ENCODE measurements at regions of chr11 and their contacts with region 1.

Region 1: GRCh38 chr11:33700425-33701271 is at the start of gene C11orf91:
- DNase-seq: peak; percentile 88 to 98 (median 95)
- ATAC-seq: peak; percentile 99
- H3K4me3 ChIP-seq: peak within 1 kb of the TSS; percentile 54
- H3K4me3 Mint-ChIP-seq: peak within 1 kb of the TSS; percentile 84 to 96 (median 92)
- H3K27ac ChIP-seq: no peak within 1 kb of the TSS
- H3K27ac Mint-ChIP-seq: peak within 1 kb of the TSS; percentile 61 to 84 (median 76)
- H3K4me1 ChIP-seq: peaks cover 9 to 13% of the 10 kb centered on the region in 2 donors
- H3K4me1 Mint-ChIP-seq: peaks cover 14 to 27% (median 23%) of the 10 kb centered on the region in 7 donors
- H3K27me3 ChIP-seq: no peaks in the 10 kb centered on the region
- H3K27me3 Mint-ChIP-seq: peaks cover 0 to 31% (median 5%) of the 10 kb centered on the region in 5 donors
- total RNA-seq, gene C11orf91: not detected

Region 2: DNA sequence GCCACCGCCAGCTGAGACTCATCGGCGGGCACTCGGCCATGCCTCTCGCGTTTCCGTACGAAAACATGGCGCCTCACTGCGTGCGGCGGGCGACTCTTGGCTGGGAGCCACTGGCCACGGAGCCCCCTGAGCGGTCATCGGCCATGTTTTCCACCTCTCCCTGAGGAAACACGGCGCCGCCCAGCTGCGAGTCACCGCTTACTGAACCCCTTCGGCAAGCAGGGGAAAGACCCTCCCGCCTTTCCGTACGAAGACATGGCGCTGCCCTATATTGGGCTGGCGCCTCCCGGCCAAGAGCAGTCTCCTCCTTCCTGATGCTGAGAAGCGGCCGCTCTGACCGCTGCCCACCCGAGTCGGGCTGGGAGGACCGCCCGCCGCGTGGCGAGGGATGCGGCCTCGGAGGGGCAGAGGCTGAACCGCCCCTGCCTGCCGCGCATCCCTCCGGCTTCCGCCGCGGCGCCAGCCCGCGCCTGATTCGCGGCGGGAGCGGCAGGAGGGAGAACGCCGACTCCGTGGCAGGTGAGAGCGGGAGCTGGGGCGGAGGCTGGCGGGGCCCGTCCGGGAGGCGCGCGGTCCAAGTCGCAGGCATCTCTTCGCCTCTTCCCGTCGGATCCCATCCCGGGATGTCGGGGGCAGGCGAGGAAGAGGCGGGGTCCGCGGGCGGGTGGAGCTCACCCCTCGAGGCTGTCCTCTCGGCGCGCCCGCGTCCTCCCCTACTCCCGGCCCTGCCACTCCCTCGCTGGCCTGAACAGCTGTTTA is 661.2 kb before region 1 on chr11 and contains the start of gene TCP11L1:
- CTCF ChIA-PET with region 1: no interaction called
- POLR2A ChIA-PET with region 1: no interaction called
- intact Hi-C with region 1: loop called in 1 of 2 experiments (anchors 10 kb)
- DNase-seq: peak; percentile 57 to 88 (median 76)
- ATAC-seq: peak; percentile 93
- H3K4me3 ChIP-seq: peak within 1 kb of the TSS; percentile 100
- H3K4me3 Mint-ChIP-seq: peak within 1 kb of the TSS; percentile 91 to 97 (median 94)
- H3K27ac ChIP-seq: peak within 1 kb of the TSS; percentile 82
- H3K27ac Mint-ChIP-seq: peak within 1 kb of the TSS; percentile 77 to 95 (median 92)
- H3K4me1 ChIP-seq: peaks cover 3 to 9% of the 10 kb centered on the region in 2 donors
- H3K4me1 Mint-ChIP-seq: peaks cover 0 to 17% (median 14%) of the 10 kb centered on the region in 7 donors
- H3K27me3 ChIP-seq: no peaks in the 10 kb centered on the region
- H3K27me3 Mint-ChIP-seq: peaks cover 0 to 17% (median 0%) of the 10 kb centered on the region in 5 donors
- total RNA-seq, gene TCP11L1: 9.1 to 17.1 (median 13.3) TPM

Region 3: DNA sequence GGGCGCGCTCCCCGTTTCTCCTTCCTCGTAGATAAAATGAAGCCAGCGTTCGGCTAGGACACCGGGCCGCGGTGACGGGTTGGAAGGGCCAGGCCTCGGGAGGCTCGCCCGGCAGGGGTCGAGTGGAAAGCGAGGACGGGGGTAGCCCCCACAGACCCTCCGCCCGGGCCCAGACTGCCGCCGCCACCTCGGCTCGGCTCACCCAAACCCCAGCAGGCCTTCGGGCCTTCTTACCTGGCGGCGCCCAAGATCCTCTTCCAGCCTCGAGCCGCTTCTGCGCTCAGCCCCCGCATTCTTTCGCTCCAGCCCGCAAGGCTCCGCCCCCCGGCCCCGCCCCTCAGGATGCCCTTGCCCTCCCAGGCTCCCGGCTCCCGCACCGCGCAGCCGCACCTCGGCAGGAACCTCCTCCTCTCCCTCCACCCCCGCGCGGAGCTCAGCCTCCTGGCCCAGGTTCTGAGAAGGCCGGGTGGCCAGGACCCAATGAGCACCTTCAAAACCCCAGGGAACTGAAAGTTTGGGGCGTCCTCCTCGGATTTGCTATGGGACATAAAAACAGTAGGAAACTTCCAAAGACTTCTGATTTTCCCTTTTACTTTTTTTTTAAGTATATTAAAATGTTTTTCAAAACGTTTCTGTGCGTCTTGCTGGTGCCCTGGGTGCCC is 35.6 kb after region 1 on chr11 and contains the start of gene CD59:
- CTCF ChIA-PET with region 1: no interaction called
- POLR2A ChIA-PET with region 1: interaction called, 9 read pairs
- intact Hi-C with region 1: loop called (anchors 1 kb)
- DNase-seq: peak; percentile 75 to 94 (median 85)
- ATAC-seq: peak; percentile 92
- H3K4me3 ChIP-seq: peak within 1 kb of the TSS; percentile 76
- H3K4me3 Mint-ChIP-seq: peak within 1 kb of the TSS; percentile 87 to 97 (median 92)
- H3K27ac ChIP-seq: peak within 1 kb of the TSS; percentile 72
- H3K27ac Mint-ChIP-seq: peak within 1 kb of the TSS; percentile 79 to 94 (median 86)
- H3K4me1 ChIP-seq: peaks cover 9 to 17% of the 10 kb centered on the region in 2 donors
- H3K4me1 Mint-ChIP-seq: peaks cover 21 to 41% (median 36%) of the 10 kb centered on the region in 7 donors
- H3K27me3 ChIP-seq: no peaks in the 10 kb centered on the region
- H3K27me3 Mint-ChIP-seq: peaks cover 0 to 11% (median 0%) of the 10 kb centered on the region in 5 donors
- total RNA-seq, gene CD59: 23.3 to 152 (median 62.7) TPM

Region 4: DNA sequence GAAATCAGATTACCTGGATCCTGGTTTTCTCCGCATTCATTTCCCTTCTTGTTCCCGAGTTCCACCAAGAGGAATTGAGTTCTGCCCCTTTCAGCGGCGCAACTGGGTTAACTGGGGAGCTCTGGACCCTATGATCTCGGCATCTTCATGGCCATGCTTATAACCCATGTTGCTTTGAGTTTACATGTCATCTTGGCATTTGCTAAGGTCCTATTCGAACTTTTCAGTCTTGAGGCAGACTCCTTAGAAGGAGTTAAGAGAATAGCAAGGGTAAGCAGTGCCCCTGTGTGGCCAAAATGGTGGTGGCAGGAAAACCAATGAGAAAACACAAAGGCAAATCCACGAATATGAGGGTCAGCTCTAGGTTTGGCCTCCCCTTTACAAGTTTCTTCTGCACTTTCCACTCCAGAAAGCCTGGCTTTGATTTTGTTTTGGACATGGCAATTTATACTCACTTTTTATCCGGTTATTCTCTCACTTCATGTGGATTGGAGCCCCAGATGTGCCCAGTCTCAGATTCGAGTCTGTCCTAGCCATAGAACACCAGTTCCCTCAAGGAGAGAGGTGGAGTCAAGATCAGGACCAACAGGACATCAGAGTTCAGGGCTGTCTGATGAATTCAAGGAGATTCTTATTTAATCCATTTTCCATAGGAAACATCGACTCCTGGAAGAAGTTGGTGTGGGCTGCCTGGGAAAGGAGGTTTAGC is 128.9 kb after region 1 on chr11:
- CTCF ChIA-PET with region 1: no interaction called
- POLR2A ChIA-PET with region 1: no interaction called
- intact Hi-C with region 1: no loop called
- DNase-seq: peak; percentile 20 to 61 (median 54)
- ATAC-seq: peak; percentile 89
- H3K4me3 ChIP-seq: no peak overlapping the region
- H3K4me3 Mint-ChIP-seq: peak overlapping the region; percentile 74 to 92 (median 82)
- H3K27ac ChIP-seq: no peak overlapping the region
- H3K27ac Mint-ChIP-seq: no peak overlapping the region
- H3K4me1 ChIP-seq: peaks cover 4% of the 10 kb centered on the region in 2 donors
- H3K4me1 Mint-ChIP-seq: peaks cover 2 to 7% (median 6%) of the 10 kb centered on the region in 7 donors
- H3K27me3 ChIP-seq: peaks cover 0 to 10% of the 10 kb centered on the region in 2 donors
- H3K27me3 Mint-ChIP-seq: peaks cover 45 to 68% (median 66%) of the 10 kb centered on the region in 5 donors

Region 5: GRCh38 chr11:34243726-34244464 is 543.2 kb after region 1 on chr11:
- CTCF ChIA-PET with region 1: no interaction called
- POLR2A ChIA-PET with region 1: no interaction called
- intact Hi-C with region 1: loop called in 1 of 2 experiments (anchors 10 kb)
- DNase-seq: peak in 1 of 9 donors; percentile 54
- ATAC-seq: no peak
- H3K4me3 ChIP-seq: no peak overlapping the region
- H3K4me3 Mint-ChIP-seq: peak overlapping the region in 1 of 10 donors; percentile 53
- H3K27ac ChIP-seq: no peak overlapping the region
- H3K27ac Mint-ChIP-seq: peak overlapping the region in 2 of 9 donors; percentile 4 to 13
- H3K4me1 ChIP-seq: peaks cover 12 to 17% of the 10 kb centered on the region in 2 donors
- H3K4me1 Mint-ChIP-seq: peaks cover 16 to 77% (median 33%) of the 10 kb centered on the region in 7 donors
- H3K27me3 ChIP-seq: no peaks in the 10 kb centered on the region
- H3K27me3 Mint-ChIP-seq: peaks cover 0 to 10% (median 0%) of the 10 kb centered on the region in 5 donors

Region 6: DNA sequence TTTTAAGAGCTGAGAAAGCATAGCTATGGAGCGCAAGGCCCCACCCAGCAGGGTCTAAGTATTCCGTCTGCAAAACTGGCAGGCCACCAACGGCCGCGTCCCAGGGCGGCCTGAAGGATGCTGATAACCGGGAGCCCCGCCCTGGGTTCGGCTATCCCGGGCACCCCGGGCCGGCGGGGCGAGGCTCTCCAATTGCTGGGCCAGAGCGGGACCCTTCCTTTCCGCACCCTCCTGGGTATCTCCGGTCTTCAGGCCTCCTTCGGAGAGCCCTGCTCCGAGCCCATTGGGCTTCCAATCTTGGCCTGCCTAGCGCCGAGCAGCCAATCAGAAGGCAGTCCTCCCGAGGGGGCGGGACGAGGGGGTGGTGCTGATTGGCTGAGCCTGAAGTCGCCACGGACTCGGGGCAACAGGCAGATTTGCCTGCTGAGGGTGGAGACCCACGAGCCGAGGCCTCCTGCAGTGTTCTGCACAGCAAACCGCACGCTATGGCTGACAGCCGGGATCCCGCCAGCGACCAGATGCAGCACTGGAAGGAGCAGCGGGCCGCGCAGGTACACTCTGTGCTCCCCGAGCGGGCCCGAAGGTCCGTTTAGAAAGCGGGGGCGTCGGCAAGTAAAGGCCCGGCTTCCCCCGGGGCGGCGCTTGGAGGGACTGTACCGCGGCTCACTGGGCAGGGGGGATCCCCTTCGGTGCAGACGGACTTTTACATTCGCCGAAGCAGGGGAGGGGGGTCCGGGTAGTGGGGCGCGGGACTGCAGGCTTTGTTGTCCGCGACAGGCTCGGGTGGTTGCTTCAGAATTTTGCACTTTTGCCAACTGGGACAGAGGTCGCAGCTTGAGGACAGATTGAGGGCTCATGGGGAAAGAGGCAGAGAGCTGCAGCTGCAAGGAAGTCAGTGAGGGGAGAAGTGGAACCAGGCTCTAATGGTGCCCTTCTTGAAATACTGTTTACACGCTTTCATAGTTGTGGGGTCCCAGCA is 738.2 kb after region 1 on chr11 and contains the start of gene CAT:
- CTCF ChIA-PET with region 1: no interaction called
- POLR2A ChIA-PET with region 1: no interaction called
- intact Hi-C with region 1: loop called (anchors 1 to 2 kb)
- DNase-seq: peak; percentile 94 to 98 (median 97)
- ATAC-seq: peak; percentile 98
- H3K4me3 ChIP-seq: peak within 1 kb of the TSS; percentile 90
- H3K4me3 Mint-ChIP-seq: peak within 1 kb of the TSS; percentile 88 to 98 (median 96)
- H3K27ac ChIP-seq: peak within 1 kb of the TSS; percentile 79
- H3K27ac Mint-ChIP-seq: peak within 1 kb of the TSS; percentile 89 to 97 (median 93)
- H3K4me1 ChIP-seq: peaks cover 7 to 19% of the 10 kb centered on the region in 2 donors
- H3K4me1 Mint-ChIP-seq: peaks cover 21 to 47% (median 35%) of the 10 kb centered on the region in 7 donors
- H3K27me3 ChIP-seq: no peaks in the 10 kb centered on the region
- H3K27me3 Mint-ChIP-seq: no peaks in the 10 kb centered on the region
- total RNA-seq, gene CAT: 23.3 to 55.9 (median 42.6) TPM